ENCODE measurements at regions of chr4 and their contacts with region 1.

Region 1: DNA sequence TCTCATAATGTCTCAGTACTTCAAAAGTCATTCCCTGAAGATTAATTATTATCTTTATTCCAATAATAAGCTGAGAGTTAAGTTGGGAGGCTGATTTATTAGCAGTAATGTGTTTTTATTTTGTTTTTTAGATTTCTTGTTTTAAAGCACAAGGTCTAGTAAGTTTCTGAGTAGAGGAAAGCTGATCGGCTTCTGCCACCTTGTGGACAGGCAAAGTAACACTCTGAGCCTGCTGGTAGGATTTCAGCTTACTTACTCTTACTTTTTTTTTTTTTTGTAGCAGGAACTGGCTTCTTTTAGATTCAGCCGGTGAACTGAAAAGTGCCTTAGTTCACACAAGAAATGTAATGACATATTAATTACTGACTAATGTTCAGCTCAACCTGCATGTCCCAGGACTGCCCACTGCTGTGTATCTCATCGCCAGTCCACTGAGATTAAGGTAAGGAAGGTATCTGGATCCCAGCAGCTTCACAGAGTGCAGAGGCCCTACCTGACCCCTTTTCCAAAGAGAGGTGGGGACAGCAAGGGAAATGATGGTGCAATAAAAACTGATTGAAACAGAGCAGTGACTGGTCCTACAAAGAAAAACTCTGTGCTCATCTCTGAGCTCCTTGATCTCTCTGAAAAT is 126.5 kb downstream of the ADGRA3 start:
- DNase-seq: peak; percentile 44
- H3K27ac ChIP-seq: no peak overlapping the region
- CTCF ChIP-seq: peak; percentile 84

Region 2: GRCh38 chr4:21790438-21791029 is 598.8 kb before region 1 on chr4:
- CTCF ChIA-PET with region 1: interaction called, 55 read pairs
- POLR2A ChIA-PET with region 1: no interaction called
- DNase-seq: no peak
- H3K27ac ChIP-seq: no peak overlapping the region
- CTCF ChIP-seq: peak; percentile 39

Region 3: GRCh38 chr4:22129454-22130029 is 259.8 kb before region 1 on chr4:
- CTCF ChIA-PET with region 1: interaction called, 10 read pairs
- POLR2A ChIA-PET with region 1: no interaction called
- DNase-seq: peak; percentile 42
- H3K27ac ChIP-seq: no peak overlapping the region
- CTCF ChIP-seq: no peak; the same call in 1 of the 2 replicates

Region 4: DNA sequence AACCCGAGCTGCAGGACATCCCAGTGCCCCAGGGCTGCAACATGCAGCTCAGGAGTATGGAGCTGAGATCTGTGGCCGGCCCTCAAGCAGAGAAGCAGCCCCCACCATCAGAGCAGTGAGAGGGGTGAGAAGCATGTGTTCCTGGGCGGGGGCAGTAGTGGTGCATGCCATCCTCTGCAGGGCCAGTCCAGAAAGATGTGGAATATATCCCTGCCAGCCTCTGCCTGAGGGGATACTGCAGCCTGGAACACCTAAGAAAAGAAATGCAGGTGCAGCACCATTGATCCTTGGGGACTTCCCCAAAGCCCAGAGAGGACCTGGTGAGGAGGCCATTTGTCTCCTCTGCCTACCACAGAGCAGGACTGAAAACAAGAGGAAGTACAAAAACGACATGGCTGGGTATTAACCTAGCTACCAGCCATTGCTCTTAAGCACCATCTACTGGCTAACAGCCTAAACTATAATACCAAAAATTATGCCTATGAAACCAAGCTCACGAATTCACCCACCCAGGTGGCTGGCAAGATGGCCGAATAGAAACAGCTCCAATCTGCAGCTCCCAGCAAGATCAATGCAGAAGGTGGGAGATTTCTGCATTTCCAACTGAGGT is 32.3 kb before region 1 on chr4:
- CTCF ChIA-PET with region 1: no interaction called
- POLR2A ChIA-PET with region 1: no interaction called
- DNase-seq: no peak
- H3K27ac ChIP-seq: no peak overlapping the region
- CTCF ChIP-seq: no peak

Region 5: GRCh38 chr4:22487328-22487727 is 98.0 kb after region 1 on chr4:
- CTCF ChIA-PET with region 1: interaction called, 10 read pairs
- POLR2A ChIA-PET with region 1: no interaction called
- DNase-seq: no peak
- H3K27ac ChIP-seq: no peak overlapping the region
- CTCF ChIP-seq: no peak

Region 6: GRCh38 chr4:22625311-22625710 is 236.0 kb after region 1 on chr4:
- CTCF ChIA-PET with region 1: no interaction called
- POLR2A ChIA-PET with region 1: no interaction called
- DNase-seq: no peak
- H3K27ac ChIP-seq: no peak overlapping the region
- CTCF ChIP-seq: no peak